Gastrocnemius medialis (tissue), 4 donors: ENCODE measurements at regions of chr11 and their contacts with region 1.

Region 1: GRCh38 chr11:123110356-123110755 is 48.4 kb upstream of the HSPA8 start:
- DNase-seq: no peak
- ATAC-seq: no peak
- H3K4me3 ChIP-seq: no peak overlapping the region
- H3K27ac ChIP-seq: no peak overlapping the region
- H3K4me1 ChIP-seq: peaks cover 0 to 9% of the 10 kb centered on the region in 2 donors
- H3K27me3 ChIP-seq: no peaks in the 10 kb centered on the region
- CTCF ChIP-seq: no peak
- POLR2A ChIP-seq: no peak

Region 2: GRCh38 chr11:122937983-122938382 is 172.4 kb before region 1 on chr11:
- in situ Hi-C with region 1: no loop called
- intact Hi-C with region 1: no loop called
- DNase-seq: no peak
- ATAC-seq: no peak
- H3K4me3 ChIP-seq: no peak overlapping the region
- H3K27ac ChIP-seq: no peak overlapping the region
- H3K4me1 ChIP-seq: no peaks in the 10 kb centered on the region
- H3K27me3 ChIP-seq: peaks cover 0 to 3% (median 0%) of the 10 kb centered on the region in 3 donors
- CTCF ChIP-seq: no peak
- POLR2A ChIP-seq: no peak

Region 3: GRCh38 chr11:123246749-123247495 is 136.6 kb after region 1 on chr11:
- in situ Hi-C with region 1: loop called (anchors 5 kb)
- intact Hi-C with region 1: loop called (anchors 1 kb)
- DNase-seq: peak; percentile 45 to 55
- ATAC-seq: peak; percentile 70 to 84
- H3K4me3 ChIP-seq: peak overlapping the region in 2 of 4 donors; percentile 24 to 42
- H3K27ac ChIP-seq: no peak overlapping the region
- H3K4me1 ChIP-seq: peaks cover 0 to 6% of the 10 kb centered on the region in 2 donors
- H3K27me3 ChIP-seq: no peaks in the 10 kb centered on the region
- CTCF ChIP-seq: peak; percentile 82 to 99 (median 87)
- POLR2A ChIP-seq: no peak

Region 4: GRCh38 chr11:123261345-123262106 is 151.2 kb after region 1 on chr11:
- in situ Hi-C with region 1: no loop called
- intact Hi-C with region 1: loop called (anchors 5 kb)
- DNase-seq: peak; percentile 41 to 59
- ATAC-seq: peak; percentile 89 to 96
- H3K4me3 ChIP-seq: peak overlapping the region; percentile 30 to 55 (median 38)
- H3K27ac ChIP-seq: no peak overlapping the region
- H3K4me1 ChIP-seq: no peaks in the 10 kb centered on the region
- H3K27me3 ChIP-seq: peaks cover 0 to 3% (median 0%) of the 10 kb centered on the region in 3 donors
- CTCF ChIP-seq: peak; percentile 57 to 92 (median 69)
- POLR2A ChIP-seq: no peak